Ascending aorta (tissue), 2 donors: ENCODE measurements at regions of chr1 and their contacts with region 1.

Region 1: DNA sequence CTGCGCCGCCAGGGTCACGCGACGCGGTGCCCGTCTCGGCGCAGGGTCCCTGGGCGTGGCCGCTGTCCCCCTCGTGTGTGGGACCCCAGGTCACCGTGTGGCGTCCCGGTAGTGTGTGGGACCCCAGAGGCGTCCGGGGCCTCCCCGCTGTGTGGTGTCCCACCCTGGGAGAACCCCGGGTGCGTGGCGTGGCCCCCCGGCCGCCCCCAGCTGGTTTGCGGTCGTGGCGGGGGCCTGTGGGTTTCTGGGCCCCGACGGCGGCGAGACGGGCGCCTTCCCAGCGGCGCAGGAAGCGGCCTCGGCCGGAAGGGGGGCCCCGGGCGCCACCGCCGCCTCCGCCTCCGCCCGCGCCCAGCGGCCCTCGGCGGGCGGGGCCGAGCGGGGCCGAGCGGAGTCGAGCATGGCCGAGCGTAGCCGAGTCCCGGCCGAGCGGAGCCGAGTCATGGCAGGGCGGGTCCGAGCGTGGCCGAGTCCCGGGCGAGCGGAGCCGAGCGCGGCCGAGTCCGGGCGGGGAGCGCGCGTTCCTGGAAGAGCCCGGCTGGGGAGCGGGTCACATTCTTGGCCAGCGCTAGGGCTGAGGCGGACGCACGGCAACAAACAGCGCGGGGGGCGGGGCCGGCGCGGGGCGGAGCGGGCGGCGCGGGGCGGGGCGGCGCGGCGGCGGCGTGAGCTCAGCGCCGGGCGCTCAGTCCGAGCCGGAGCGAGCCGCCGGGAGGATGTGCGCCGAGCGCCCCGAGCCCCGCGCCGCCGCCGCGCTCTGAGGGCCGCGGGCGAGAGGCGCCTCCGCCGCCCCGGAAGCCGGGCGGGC is 569 bp upstream of the SKI start:
- DNase-seq: peak; percentile 78 to 97
- H3K4me3 ChIP-seq: peak overlapping the region; percentile 81 to 90
- H3K27ac ChIP-seq: peak overlapping the region; percentile 99
- H3K4me1 ChIP-seq: peaks cover 5 to 11% of the 10 kb centered on the region in 2 donors
- H3K27me3 ChIP-seq: no peaks in the 10 kb centered on the region
- CTCF ChIP-seq: peak in 2 of 3 experiments; percentile 5 to 47

Region 2: DNA sequence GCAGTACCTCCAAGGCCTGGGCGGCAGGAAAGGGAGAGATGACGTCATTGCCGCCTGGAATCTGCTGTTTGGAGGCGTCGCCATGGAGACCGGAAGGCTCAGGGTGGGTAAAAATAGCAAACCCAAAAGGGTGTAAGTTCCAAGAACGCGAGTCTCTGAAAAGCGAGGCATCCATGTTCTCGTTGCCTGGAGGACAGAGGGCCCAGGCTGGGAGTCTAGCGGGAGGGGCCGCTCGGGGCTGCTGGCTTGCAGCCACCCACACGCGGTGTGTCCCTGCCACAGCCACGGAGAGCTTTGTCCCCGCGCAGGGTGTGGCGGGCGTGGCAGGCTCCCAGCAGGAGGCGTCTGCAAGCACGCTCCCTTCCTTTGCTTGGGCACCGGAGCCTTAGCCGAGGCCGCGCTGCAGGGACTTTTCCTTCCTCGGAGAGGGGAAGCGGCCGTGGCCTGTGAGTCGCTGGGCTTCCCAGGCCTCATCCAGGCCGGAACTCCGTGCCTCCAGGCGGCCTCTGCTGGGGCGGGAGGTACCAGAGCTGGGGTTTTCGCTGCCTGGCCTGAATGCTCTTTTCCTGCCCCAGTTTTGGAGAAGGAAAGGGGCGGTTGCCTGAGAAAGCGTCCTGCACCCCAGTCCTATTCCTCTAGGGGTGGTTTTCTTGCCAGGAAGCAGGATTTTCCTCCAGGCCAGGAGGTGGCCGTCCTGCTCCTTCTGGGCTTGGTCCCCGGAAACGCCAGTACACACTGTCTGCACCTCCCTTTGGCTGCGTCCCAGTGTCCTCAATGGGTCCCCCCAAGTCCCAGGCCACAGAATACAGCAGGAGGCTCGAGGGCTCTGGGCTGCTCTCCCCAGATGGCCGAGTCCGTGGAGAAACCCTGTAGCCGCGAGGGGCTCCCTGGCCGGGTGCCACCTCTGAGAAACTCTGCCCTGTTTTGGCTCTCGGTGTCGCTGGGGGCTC is 14.7 kb before region 1 on chr1:
- intact Hi-C with region 1: loop called (anchors 1 kb)
- DNase-seq: peak; percentile 87 to 98
- H3K4me3 ChIP-seq: peak overlapping the region; percentile 51 to 54
- H3K27ac ChIP-seq: peak overlapping the region; percentile 99
- H3K4me1 ChIP-seq: peaks cover 34 to 61% of the 10 kb centered on the region in 2 donors
- H3K27me3 ChIP-seq: no peaks in the 10 kb centered on the region
- CTCF ChIP-seq: peak in 2 of 3 experiments; percentile 10 to 35